Posterior cingulate gyrus (tissue), 11 donors: ENCODE measurements at regions of chr14 and their contacts with region 1.

Region 1: DNA sequence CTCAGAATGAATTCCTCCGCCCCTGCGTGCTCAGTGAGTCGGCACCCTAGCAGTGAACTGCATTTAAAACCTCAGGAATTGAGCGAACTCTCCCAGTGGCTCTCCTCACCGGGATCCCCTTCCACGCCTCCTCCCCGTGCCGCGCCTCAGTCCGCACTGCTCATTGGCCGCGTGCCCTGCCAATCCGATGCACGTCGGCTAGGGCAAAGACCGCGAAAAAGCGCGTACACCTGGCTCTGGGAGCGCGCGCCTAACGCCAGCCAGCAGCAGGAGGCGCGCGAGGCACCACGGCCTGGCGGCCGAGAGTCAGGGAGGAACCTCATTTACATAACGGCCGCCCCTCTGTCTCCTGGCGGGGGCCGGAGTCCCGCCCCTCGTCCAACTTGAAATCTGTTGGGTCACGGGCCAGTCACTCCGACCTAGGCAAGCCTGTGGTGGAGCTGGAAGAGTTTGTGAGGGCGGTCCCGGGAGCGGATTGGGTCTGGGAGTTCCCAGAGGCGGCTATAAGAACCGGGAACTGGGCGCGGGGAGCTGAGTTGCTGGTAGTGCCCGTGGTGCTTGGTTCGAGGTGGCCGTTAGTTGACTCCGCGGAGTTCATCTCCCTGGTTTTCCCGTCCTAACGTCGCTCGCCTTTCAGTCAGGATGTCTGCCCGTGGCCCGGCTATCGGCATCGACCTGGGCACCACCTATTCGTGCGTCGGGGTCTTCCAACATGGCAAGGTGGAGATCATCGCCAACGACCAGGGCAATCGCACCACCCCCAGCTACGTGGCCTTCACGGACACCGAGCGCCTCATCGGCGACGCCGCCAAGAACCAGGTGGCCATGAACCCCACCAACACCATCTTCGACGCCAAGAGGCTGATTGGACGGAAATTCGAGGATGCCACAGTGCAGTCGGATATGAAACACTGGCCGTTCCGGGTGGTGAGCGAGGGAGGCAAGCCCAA is at the start of gene HSPA2:
- DNase-seq: peak; percentile 95 to 100 (median 98)

Region 2: DNA sequence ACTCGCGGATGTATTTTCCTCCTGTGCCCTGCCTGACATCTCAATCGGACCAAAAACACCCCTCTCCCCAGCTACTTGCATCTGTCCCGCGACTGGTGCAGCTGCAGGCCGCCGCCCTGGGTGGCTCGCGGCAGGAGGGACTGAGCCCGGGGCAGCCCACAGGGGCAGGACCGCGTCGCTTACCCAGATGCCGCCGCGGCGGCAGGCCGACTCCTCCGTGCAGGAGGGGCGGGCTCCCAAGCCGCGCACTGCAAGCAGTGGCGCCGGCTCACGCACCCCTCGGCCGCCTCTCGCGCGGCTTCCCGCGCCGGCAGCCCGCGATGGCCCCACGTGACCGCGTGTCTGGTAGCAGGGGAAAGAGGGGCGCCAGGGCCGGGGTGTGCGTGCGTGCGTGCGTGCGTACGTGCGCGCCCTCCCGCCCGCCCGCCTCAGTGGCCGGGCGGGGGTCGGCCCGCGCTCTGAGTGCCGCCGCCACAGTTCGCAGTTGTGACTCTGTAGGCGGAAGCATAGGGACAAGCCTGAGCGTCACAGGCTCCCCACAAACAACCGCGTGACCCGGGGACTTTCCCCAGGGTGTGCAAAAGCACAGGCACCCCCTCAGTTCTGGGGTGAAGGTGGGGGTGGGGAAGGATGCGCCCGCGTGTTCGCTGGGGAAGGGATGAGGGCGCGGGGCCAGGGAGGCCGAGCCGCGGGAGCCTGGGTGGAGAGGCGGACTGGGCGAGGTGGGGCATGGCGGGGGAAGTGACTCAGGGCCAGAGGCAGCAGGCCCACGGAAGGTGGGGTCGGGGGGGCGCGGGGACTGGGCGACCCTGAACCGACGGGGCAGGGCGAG is 36.8 kb before region 1 on chr14 and contains the start of gene ZBTB25:
- intact Hi-C with region 1: loop called (anchors 5 kb)
- DNase-seq: peak; percentile 79 to 99 (median 92)

Region 3: DNA sequence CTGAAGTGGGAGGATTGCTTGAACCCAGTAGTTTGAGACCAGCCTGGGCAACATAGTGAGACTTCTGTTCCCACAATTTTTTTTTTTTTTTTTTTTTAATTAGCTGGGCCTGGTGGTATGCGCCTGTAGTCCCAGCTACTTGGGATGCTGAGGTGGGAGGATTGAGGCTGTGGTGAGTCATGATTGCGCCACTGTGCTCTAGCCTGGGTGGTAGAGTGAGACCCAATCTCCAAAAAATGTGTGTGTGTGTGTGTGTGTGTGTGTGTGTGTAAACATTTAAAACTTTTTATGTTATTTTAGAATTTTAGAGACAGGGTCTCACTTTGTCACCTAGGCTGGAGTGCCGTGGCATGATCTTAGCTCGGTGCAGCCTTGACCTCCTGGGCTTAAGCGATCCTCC is 16.0 kb after region 1 on chr14:
- intact Hi-C with region 1: no loop called
- DNase-seq: no peak

Region 4: DNA sequence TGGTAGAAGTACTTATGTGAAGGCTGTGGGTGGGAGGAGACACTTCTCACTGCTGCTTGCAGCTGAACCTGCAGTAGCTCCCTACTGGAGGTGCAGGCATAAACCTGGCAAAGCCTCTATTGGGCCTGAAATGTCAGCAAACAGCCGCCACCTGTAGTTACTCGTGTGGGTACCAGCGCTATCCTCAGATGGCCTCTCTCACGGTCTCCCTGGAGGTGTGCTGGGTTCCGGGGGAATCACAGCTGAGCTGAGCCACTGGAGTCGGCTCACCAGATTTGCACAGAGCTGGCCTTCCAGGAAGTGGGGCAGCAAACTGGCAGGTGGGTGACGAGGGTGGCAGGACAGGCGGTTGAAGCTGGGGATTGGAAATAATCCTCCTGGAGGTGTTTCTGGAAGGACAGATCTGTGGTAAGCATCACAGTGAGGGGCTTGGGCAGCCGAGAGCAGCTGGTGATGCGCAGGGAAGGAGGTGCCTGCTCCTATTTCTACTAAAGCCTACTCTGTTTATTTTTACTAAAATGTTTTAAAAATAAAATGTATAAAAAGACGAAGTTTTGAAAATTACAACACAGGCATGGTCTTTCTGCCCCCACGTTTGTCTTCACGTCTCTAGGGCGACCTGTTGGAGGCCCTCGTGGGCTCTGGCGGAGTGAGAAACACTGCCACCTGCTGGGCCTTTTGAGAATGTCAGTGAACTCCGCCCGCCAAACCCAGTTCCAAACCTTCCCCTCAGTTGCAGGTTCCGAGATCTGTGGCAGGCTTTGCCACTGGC is 95.9 kb after region 1 on chr14:
- intact Hi-C with region 1: loop called (anchors 1 kb)
- DNase-seq: peak; percentile 52 to 96 (median 77)

Region 5: GRCh38 chr14:64764641-64765520 is 224.4 kb after region 1 on chr14:
- intact Hi-C with region 1: loop called (anchors 10 kb)
- DNase-seq: peak in 9 of 10 donors; percentile 45 to 96 (median 74)